Activated CD4-positive, alpha-beta T cell treated with anti-CD3 and anti-CD28 coated beads for 36 hours (primary cell): ENCODE measurements at regions of chr13 and their contacts with region 1.

Region 1: DNA sequence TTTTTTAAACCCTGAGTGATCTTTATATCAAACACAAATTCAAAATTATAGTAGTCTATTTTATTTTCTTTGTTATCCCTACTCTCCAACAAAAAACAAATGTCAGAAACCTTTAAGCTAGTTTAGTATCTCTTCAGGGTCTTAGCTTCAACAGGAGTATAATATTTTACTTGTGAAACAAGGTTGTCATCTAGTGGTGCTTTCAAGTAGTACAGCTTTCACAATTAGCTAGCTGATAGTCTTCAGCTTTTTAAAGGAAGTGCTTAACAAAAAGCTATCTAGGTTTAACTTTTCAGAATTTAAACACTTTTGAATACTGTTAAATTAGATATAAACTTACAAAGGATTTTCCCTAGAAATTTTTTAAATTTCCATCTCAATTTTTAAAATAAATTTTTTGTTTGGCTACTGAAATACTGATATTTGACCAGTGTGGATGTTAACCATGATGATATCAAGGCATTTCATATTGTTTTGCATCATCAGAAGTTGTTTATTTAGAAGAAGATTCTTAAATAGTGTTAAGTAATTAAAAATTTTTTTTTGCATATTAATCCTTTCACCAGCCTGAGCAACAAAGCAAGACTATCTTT is 34.2 kb downstream of the TDRD3 start:
- DNase-seq: no peak
- ATAC-seq: peak; percentile 80
- H3K4me3 Mint-ChIP-seq: no peak overlapping the region
- H3K27ac Mint-ChIP-seq: no peak overlapping the region
- H3K4me1 Mint-ChIP-seq: peaks cover 25% of the 10 kb centered on the region
- H3K27me3 Mint-ChIP-seq: no peaks in the 10 kb centered on the region

Region 2: GRCh38 chr13:59391696-59392095 is 1039.5 kb before region 1 on chr13:
- CTCF ChIA-PET with region 1: interaction called, 4 read pairs
- POLR2A ChIA-PET with region 1: no interaction called
- intact Hi-C with region 1: loop called (anchors 2 to 5 kb)
- DNase-seq: peak; percentile 68
- ATAC-seq: peak; percentile 96
- H3K4me3 Mint-ChIP-seq: no peak overlapping the region
- H3K27ac Mint-ChIP-seq: no peak overlapping the region
- H3K4me1 Mint-ChIP-seq: no peaks in the 10 kb centered on the region
- H3K27me3 Mint-ChIP-seq: peaks cover 2% of the 10 kb centered on the region

Region 3: GRCh38 chr13:60275208-60275607 is 156.0 kb before region 1 on chr13:
- CTCF ChIA-PET with region 1: no interaction called
- POLR2A ChIA-PET with region 1: no interaction called
- intact Hi-C with region 1: no loop called
- DNase-seq: no peak
- ATAC-seq: no peak
- H3K4me3 Mint-ChIP-seq: no peak overlapping the region
- H3K27ac Mint-ChIP-seq: no peak overlapping the region
- H3K4me1 Mint-ChIP-seq: no peaks in the 10 kb centered on the region
- H3K27me3 Mint-ChIP-seq: peaks cover 5% of the 10 kb centered on the region

Region 4: GRCh38 chr13:60335531-60335930 is 95.7 kb before region 1 on chr13:
- CTCF ChIA-PET with region 1: interaction called, 4 read pairs
- POLR2A ChIA-PET with region 1: no interaction called
- intact Hi-C with region 1: loop called (anchors 1 to 5 kb)
- DNase-seq: no peak
- ATAC-seq: no peak
- H3K4me3 Mint-ChIP-seq: no peak overlapping the region
- H3K27ac Mint-ChIP-seq: no peak overlapping the region
- H3K4me1 Mint-ChIP-seq: no peaks in the 10 kb centered on the region
- H3K27me3 Mint-ChIP-seq: peaks cover 4% of the 10 kb centered on the region

Region 5: DNA sequence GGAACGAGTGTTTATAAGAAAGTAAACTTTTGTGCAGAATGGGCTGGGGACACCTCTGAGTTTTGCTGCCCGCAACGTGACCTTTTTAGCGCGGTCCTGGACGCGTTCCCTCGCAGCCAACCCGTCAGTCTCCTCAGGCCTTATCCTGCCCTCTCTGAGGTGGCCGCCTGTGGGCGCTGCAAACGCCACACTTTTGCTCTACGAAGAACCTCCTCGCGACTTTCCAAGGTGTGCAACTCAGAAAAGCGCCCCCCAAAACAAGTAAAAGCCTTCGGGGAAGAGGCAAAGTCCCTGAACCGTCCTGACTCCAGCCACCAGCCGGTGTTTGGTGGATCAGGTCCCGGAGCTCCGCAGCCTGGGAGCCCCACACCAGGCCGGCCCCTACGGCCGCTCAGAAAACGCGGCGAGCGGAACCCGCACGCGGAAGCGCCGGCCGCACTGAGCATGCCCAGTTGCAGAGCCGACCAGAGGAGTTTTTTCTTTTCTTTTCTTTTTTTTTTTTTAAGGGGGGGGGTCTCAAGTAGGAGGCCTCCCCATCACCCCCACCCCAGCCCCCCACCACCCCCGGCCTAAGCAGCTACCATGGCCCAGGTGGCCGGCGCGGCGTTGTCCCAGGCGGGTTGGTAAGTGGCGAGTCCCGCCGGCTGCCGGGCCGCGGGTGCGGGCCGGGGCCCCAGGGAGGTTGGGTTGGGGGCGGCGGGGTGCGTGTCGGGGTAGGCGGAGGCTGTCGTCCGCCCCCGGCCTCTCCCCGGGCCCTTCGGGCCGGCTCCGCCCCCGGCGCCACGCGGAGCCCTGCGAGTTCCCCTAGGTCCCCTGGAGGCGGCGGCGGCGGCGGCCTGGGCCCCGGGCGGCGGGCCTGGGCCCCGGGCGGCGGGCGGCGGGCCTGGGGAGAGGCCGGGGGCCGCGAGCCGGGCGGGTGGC is 34.2 kb before region 1 on chr13 and contains the start of gene TDRD3:
- CTCF ChIA-PET with region 1: interaction called, 4 read pairs
- POLR2A ChIA-PET with region 1: no interaction called
- intact Hi-C with region 1: loop called (anchors 1 kb)
- DNase-seq: peak; percentile 90
- ATAC-seq: peak; percentile 78
- H3K4me3 Mint-ChIP-seq: peak within 1 kb of the TSS; percentile 93
- H3K27ac Mint-ChIP-seq: peak within 1 kb of the TSS; percentile 97
- H3K4me1 Mint-ChIP-seq: peaks cover 25% of the 10 kb centered on the region
- H3K27me3 Mint-ChIP-seq: no peaks in the 10 kb centered on the region
- total RNA-seq, gene TDRD3: 15.8 to 16.4 TPM

Region 6: GRCh38 chr13:60482012-60482411 is 50.8 kb after region 1 on chr13:
- CTCF ChIA-PET with region 1: no interaction called
- POLR2A ChIA-PET with region 1: no interaction called
- intact Hi-C with region 1: no loop called
- DNase-seq: peak; percentile 11
- ATAC-seq: peak; percentile 74
- H3K4me3 Mint-ChIP-seq: no peak overlapping the region
- H3K27ac Mint-ChIP-seq: peak overlapping the region; percentile 53
- H3K4me1 Mint-ChIP-seq: peaks cover 3% of the 10 kb centered on the region
- H3K27me3 Mint-ChIP-seq: no peaks in the 10 kb centered on the region